ENCODE measurements at regions of chr18 and their contacts with region 1.

Region 1: DNA sequence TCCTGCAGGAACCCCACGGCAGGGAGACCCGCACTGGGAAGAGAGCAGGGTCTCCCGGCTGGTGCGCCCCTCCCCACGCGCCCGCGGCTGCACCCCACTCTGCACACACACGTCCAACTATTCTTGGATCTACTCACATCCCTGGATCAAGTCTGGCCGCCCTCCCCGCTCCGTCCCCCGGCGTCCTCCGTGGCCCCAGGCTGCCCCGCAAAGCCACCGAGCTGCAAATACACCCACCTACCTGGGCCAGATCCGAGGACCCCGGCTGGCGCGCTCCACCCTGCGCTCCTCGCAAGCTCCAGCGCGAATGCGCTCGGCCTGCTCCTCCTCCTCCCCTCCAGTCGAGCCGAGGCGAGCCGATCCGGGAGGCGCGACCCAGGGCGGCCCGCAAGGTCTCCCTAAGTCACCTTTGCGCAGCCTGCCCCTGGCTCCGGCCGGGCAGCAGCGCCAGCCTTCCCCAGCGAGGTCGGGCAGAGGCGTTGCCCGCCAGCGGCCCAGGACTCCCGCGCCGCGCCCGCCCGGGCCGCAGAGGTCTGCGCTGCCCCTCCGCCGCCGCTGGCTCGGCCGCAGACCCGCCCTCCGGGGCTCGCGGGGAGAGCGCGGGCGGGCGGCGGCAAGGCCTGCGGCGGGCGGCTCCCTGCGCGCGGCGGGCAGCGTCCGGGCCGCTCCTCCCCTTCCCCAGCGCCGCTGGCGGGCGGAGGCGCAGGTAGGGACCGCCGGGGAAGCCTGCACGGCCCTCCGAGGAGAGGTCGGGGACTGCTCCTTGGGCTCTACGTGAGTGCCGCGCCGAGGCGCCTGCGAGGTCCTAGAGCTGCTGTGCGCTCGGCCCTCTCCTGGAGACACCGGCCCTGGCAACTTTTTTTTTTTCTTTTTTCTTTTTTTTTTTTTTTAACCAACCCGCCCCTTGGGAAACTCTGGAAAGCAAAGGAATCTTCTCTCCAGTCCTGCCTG is 126.0 kb downstream of the OSBPL1A start:
- DNase-seq: peak; percentile 75 to 91 (median 91)
- ATAC-seq: peak; percentile 88 to 92
- H3K4me3 ChIP-seq: peak overlapping the region; percentile 89
- H3K27ac ChIP-seq: peak overlapping the region; percentile 93
- H3K4me1 ChIP-seq: peaks cover 5% of the 10 kb centered on the region
- H3K27me3 ChIP-seq: no peaks in the 10 kb centered on the region

Region 2: GRCh38 chr18:24176727-24177416 is 94.8 kb before region 1 on chr18:
- intact Hi-C with region 1: loop called in 2 of 4 experiments (anchors 5 kb)
- DNase-seq: peak; percentile 58 to 73 (median 68)
- ATAC-seq: peak; percentile 64 to 70
- H3K4me3 ChIP-seq: no peak overlapping the region
- H3K27ac ChIP-seq: no peak overlapping the region
- H3K4me1 ChIP-seq: no peaks in the 10 kb centered on the region
- H3K27me3 ChIP-seq: no peaks in the 10 kb centered on the region

Region 3: DNA sequence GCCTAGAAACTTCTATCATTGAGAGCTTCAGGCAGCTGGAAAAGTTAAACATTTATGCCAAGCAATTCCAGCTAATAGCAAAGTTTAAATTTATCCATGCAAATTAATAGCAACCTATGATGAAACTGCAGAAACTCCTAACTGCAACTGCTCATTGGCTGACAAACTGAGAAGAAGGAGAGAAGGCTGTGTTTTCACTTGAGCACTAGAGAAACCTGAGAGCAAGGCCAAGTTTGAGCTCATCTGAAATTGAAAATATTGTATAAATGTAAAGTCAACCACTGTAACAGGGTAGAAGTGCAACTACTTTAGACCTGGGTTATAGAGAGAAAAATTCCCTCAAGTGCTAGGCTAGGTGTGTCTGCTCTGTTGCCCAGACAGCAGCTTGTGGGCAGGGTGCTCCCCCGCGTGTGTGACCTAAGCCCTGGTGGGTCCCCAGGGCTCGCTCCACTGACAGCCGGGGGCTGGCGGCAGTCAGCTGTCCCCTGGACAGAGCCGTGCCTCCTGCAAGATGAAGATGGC is 82.6 kb before region 1 on chr18:
- intact Hi-C with region 1: no loop called
- DNase-seq: no peak
- ATAC-seq: peak in 1 of 2 donors; percentile 76
- H3K4me3 ChIP-seq: no peak overlapping the region
- H3K27ac ChIP-seq: no peak overlapping the region
- H3K4me1 ChIP-seq: no peaks in the 10 kb centered on the region
- H3K27me3 ChIP-seq: no peaks in the 10 kb centered on the region

Region 4: GRCh38 chr18:24231773-24232735 is 39.6 kb before region 1 on chr18:
- intact Hi-C with region 1: loop called in 1 of 4 experiments (anchors 5 kb)
- DNase-seq: peak in 1 of 3 donors; percentile 27
- ATAC-seq: peak; percentile 78 to 79
- H3K4me3 ChIP-seq: peak overlapping the region; percentile 7
- H3K27ac ChIP-seq: peak overlapping the region; percentile 67
- H3K4me1 ChIP-seq: peaks cover 3% of the 10 kb centered on the region
- H3K27me3 ChIP-seq: no peaks in the 10 kb centered on the region

Region 5: DNA sequence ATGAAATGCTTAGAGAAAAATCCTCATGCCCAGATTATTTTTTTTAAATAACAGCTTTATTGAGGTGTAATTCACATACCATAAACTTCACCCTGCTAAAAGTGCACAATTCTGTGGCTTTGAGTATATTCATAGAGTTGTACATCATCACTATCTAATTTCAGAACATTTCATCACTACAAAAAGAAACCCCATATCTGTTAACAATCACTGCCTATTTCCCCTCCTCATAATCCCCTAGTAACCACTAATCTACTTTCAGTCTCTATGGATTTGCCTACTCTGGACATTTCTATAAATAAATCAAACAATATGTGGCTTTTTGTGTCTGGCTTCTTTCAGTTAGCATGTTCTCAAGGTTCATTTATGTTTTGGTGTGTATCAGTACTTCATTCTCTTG is 74.6 kb after region 1 on chr18:
- intact Hi-C with region 1: no loop called
- DNase-seq: no peak
- ATAC-seq: no peak
- H3K4me3 ChIP-seq: no peak overlapping the region
- H3K27ac ChIP-seq: no peak overlapping the region
- H3K4me1 ChIP-seq: no peaks in the 10 kb centered on the region
- H3K27me3 ChIP-seq: no peaks in the 10 kb centered on the region

Measured in right cardiac atrium (tissue), 5 donors.